ENCODE measurements at regions of chr19 and their contacts with region 1.

Region 1: GRCh38 chr19:38975214-38975860 is at the start of gene FBXO17:
- DNase-seq: peak; percentile 47
- ATAC-seq: peak; percentile 74
- H3K4me3 ChIP-seq: peak within 1 kb of the TSS; percentile 67 to 81 (median 80)
- H3K27ac ChIP-seq: peak within 1 kb of the TSS; percentile 99
- H3K4me1 ChIP-seq: peaks cover 57% of the 10 kb centered on the region
- H3K27me3 ChIP-seq: no peaks in the 10 kb centered on the region
- CTCF ChIP-seq: no peak
- EP300 ChIP-seq: no peak
- POLR2A ChIP-seq: peak; percentile 28 to 41; a peak in 3 of 4 replicates
- RAD21 ChIP-seq: no peak
- total RNA-seq, gene FBXO17: 17.9 and 22.1 TPM in 2 replicates

Region 2: GRCh38 chr19:39038098-39038497 is 62.8 kb after region 1 on chr19:
- CTCF ChIA-PET with region 1: no interaction called
- POLR2A ChIA-PET with region 1: no interaction called
- in situ Hi-C with region 1: loop called (anchors 5 kb)
- intact Hi-C with region 1: no loop called
- DNase-seq: peak; percentile 61
- ATAC-seq: peak; percentile 98
- H3K4me3 ChIP-seq: peak overlapping the region in 1 of 3 experiments; percentile 46; a peak in 2 of 6 replicates
- H3K27ac ChIP-seq: no peak overlapping the region
- H3K4me1 ChIP-seq: peaks cover 25% of the 10 kb centered on the region
- H3K27me3 ChIP-seq: no peaks in the 10 kb centered on the region; a peak in 2 of 5 replicates
- CTCF ChIP-seq: peak; percentile 79
- EP300 ChIP-seq: no peak
- POLR2A ChIP-seq: no peak
- RAD21 ChIP-seq: 0 out of 2 replicates have a peak, but pooled peaks have one; percentile 32

Region 3: GRCh38 chr19:39052243-39052746 is 77.0 kb after region 1 on chr19:
- CTCF ChIA-PET with region 1: no interaction called
- POLR2A ChIA-PET with region 1: no interaction called
- in situ Hi-C with region 1: no loop called
- intact Hi-C with region 1: loop called (anchors 5 kb)
- DNase-seq: peak; percentile 48
- ATAC-seq: peak; percentile 88
- H3K4me3 ChIP-seq: no peak overlapping the region
- H3K27ac ChIP-seq: no peak overlapping the region
- H3K4me1 ChIP-seq: peaks cover 40% of the 10 kb centered on the region
- H3K27me3 ChIP-seq: no peaks in the 10 kb centered on the region
- CTCF ChIP-seq: peak; percentile 94
- EP300 ChIP-seq: no peak
- POLR2A ChIP-seq: no peak
- RAD21 ChIP-seq: peak; percentile 76